ENCODE measurements at regions of chr1 and their contacts with region 1.

Region 1: DNA sequence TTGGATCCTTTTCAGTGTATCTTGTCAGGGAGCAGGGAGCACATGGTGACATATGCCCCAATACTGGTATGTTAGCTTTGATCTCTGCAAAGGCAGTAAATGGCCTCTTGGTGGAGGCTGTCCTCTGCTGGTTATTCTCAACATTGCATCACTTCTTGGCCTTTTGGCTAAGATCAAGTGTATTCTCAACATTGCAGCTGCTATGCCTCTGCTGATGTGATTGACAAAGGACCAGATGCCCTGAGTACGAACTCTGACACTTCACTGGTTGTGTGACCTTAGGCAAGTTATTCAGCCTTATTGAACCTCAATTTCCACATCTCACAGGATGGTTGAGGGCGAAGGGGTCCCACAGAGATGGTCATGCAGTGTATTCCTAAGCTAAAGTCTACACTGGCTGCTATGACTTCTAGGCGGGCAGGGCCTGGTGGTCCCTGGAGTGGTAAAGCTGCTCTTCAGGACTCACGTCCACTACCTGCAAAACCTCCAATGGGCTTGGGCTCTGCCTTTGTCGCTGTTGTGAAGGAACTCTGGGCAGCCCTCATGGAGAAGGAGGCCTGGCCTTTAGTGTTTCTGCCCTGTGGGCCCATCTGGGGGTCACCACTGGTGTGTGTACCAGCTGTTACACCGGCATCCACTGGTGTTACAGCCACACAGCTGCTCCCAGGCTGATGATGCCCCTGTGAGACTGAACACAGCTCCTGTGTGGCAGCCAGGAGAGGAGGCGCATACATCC is 64.8 kb downstream of the DNTTIP2 start:
- DNase-seq: peak; percentile 31
- H3K4me3 Mint-ChIP-seq: no peak overlapping the region
- H3K27ac Mint-ChIP-seq: no peak overlapping the region
- H3K4me1 Mint-ChIP-seq: peaks cover 15% of the 10 kb centered on the region
- H3K27me3 Mint-ChIP-seq: no peaks in the 10 kb centered on the region

Region 2: DNA sequence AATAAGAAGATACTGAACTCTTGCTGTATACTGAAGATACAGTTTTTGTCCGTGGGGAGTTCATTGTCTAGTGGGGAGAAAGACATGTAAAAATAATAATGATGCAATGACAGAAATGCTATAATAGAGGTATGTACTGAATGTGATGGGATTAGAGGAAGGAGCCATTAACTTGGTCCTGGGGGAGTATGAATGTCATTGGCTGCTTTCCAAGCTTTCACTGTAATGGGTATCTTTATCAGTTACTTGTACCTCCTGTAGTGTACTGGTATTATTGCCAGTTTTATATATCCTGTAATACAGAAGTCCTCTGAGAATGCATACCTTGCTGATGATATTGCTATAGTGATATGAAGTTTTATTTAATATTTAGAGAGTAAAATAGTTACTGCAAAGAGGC is 1726.7 kb before region 1 on chr1:
- intact Hi-C with region 1: no loop called
- DNase-seq: no peak
- H3K4me3 Mint-ChIP-seq: no peak overlapping the region
- H3K27ac Mint-ChIP-seq: no peak overlapping the region
- H3K4me1 Mint-ChIP-seq: peaks cover under 1% of the 10 kb centered on the region
- H3K27me3 Mint-ChIP-seq: no peaks in the 10 kb centered on the region

Region 3: GRCh38 chr1:93629099-93630059 is 184.8 kb before region 1 on chr1:
- intact Hi-C with region 1: loop called (anchors 1 kb)
- DNase-seq: peak; percentile 24
- H3K4me3 Mint-ChIP-seq: no peak overlapping the region
- H3K27ac Mint-ChIP-seq: no peak overlapping the region
- H3K4me1 Mint-ChIP-seq: no peaks in the 10 kb centered on the region
- H3K27me3 Mint-ChIP-seq: peaks cover 7% of the 10 kb centered on the region

Region 4: GRCh38 chr1:93680757-93681550 is 133.3 kb before region 1 on chr1:
- intact Hi-C with region 1: no loop called
- DNase-seq: peak; percentile 19
- H3K4me3 Mint-ChIP-seq: peak overlapping the region; percentile 84
- H3K27ac Mint-ChIP-seq: no peak overlapping the region
- H3K4me1 Mint-ChIP-seq: peaks cover 12% of the 10 kb centered on the region
- H3K27me3 Mint-ChIP-seq: peaks cover 72% of the 10 kb centered on the region

Measured in activated T-helper 1 cell treated with anti-CD3 and anti-CD28 coated beads, Interleukin-12 subunit alpha, Interleukin-12 subunit beta, Interleukin-2, Interleukin-4 antibody, amounts not matched to agents 30 ng/mL and 10 ng/mL and 1 ng/mL, durations not matched to agents 14 hours and 24 hours and 36 hours (primary cell).